A673 (cell line): ENCODE measurements at regions of chr12 and their contacts with region 1.

Region 1: DNA sequence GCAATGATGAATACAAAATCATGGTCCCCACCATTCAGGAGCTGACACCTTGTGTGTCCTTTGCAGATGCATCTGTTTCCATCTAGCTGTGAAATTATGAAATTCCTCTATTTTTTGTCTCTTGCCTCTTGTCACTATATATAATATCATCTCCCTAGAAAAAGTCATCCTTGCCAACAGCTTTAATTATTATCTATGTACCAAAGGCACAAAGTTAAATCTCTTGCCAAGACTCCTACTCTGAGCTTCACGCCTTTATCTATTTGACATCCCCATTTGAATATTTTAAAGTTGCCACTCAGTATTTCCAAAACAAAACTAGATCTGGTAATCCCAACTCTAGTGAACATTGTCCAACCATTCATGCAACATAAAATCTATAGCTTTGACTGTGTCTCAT is 32.0 kb upstream of the PRB2 start:
- DNase-seq: no peak
- H3K4me3 ChIP-seq: no peak overlapping the region
- H3K27ac ChIP-seq: no peak overlapping the region
- H3K4me1 ChIP-seq: no peaks in the 10 kb centered on the region
- H3K27me3 ChIP-seq: no peaks in the 10 kb centered on the region
- CTCF ChIP-seq: no peak

Region 2: GRCh38 chr12:10936506-10936905 is 490.8 kb before region 1 on chr12:
- CTCF ChIA-PET with region 1: no interaction called
- POLR2A ChIA-PET with region 1: interaction called, 15 read pairs
- intact Hi-C with region 1: no loop called
- DNase-seq: no peak
- H3K4me3 ChIP-seq: no peak overlapping the region
- H3K27ac ChIP-seq: no peak overlapping the region
- H3K4me1 ChIP-seq: no peaks in the 10 kb centered on the region
- H3K27me3 ChIP-seq: no peaks in the 10 kb centered on the region
- CTCF ChIP-seq: no peak

Region 3: GRCh38 chr12:12171991-12172521 is 744.7 kb after region 1 on chr12:
- CTCF ChIA-PET with region 1: no interaction called
- POLR2A ChIA-PET with region 1: no interaction called
- intact Hi-C with region 1: no loop called
- DNase-seq: peak; percentile 86
- H3K4me3 ChIP-seq: no peak overlapping the region
- H3K27ac ChIP-seq: peak overlapping the region; percentile 64
- H3K4me1 ChIP-seq: peaks cover 32% of the 10 kb centered on the region
- H3K27me3 ChIP-seq: no peaks in the 10 kb centered on the region
- CTCF ChIP-seq: no peak